PC-3 (cell line): ENCODE measurements at regions of chr7 and their contacts with region 1.

Region 1: DNA sequence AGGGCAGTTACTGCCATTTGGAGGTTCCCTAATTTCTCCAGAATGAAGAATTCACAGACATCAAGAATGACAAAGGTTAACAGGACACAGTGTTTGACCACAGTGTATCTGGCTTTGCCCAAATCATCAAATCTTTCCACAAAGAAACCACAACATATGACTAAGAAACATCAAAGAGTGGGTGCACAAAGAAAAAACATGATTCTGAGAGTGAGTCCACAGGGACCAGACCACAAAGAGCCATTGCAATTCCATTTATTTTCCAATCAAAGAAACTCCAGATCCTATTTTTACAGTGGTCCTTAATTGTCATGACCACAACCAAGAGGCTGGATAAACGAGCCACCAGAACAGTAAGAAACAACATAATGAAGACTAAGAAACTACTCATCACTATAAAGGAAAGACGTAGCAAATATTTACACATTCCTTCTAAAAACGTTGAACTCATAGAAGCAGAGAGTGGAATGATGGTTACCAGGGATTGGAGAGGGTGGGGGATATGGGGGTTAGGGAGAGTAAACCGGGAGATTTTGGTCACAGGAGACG is 286.5 kb downstream of the DOCK4 start:
- DNase-seq: peak; percentile 76
- ATAC-seq: peak; percentile 90
- H3K4me3 ChIP-seq: peak overlapping the region; percentile 46
- H3K27ac ChIP-seq: peak overlapping the region; percentile 59
- H3K4me1 ChIP-seq: peaks cover 26% of the 10 kb centered on the region
- H3K27me3 ChIP-seq: no peaks in the 10 kb centered on the region
- CTCF ChIP-seq: no peak

Region 2: GRCh38 chr7:111931016-111931517 is 11.4 kb after region 1 on chr7:
- CTCF ChIA-PET with region 1: no interaction called
- POLR2A ChIA-PET with region 1: no interaction called
- intact Hi-C with region 1: loop called (anchors 1 kb)
- DNase-seq: peak; percentile 90
- ATAC-seq: peak; percentile 93
- H3K4me3 ChIP-seq: no peak overlapping the region
- H3K27ac ChIP-seq: peak overlapping the region; percentile 94
- H3K4me1 ChIP-seq: peaks cover 21% of the 10 kb centered on the region
- H3K27me3 ChIP-seq: no peaks in the 10 kb centered on the region
- CTCF ChIP-seq: no peak